Right cardiac atrium (tissue), 5 donors: ENCODE measurements at regions of chr12 and their contacts with region 1.

Region 1: DNA sequence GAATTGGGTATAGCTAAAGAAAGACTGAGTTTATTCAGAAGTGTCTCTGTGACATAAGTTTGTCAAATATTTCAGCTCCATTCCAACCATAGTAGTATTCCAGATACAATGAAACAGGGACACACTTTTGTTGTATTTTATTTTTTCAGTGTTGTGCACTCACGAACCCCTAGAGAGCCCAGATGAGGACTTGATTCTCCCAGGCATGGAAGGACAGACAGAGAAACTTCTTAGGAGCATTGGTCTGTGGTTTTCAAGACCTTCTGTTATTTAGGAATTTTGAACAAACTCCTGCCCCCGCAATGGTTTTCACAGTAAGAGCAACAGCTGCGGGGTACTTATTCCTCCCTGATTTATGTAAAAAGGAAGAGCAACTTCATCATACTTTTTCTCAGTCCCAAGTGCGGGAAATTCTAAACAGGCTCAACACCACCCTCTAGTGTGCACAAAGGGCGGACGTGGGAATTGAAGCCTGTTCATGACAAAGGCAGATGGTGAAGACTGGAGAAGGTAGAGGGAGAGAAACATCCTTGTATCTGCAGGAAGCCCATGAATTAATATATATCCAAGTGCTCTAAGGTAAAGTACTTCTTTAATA is 147.6 kb downstream of the PAH start:
- DNase-seq: peak; percentile 37 to 78 (median 44)
- ATAC-seq: peak; percentile 74 to 81
- H3K4me3 ChIP-seq: no peak overlapping the region
- H3K27ac ChIP-seq: no peak overlapping the region
- H3K4me1 ChIP-seq: no peaks in the 10 kb centered on the region
- H3K27me3 ChIP-seq: no peaks in the 10 kb centered on the region

Region 2: DNA sequence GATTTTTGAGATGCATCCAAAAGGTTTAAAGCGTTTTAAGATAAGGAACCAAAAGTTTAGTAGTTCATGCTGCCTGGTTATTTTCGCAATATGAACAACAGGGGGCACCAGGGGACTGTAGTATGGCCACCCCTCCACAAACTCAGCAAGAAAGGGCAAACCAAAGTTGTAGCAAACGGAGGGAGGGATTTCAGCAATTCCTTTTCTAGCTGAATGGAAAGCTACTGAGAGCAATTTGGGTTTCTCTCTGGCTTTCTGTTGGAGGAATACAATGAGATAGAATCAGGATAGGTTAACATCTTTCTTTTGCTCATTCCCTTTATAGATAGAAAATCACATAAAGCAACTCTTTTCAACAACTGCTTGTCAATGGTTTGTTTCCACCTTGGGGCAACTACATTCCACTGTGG is 829.6 kb before region 1 on chr12:
- intact Hi-C with region 1: loop called in 1 of 4 experiments (anchors 10 kb)
- DNase-seq: peak in 2 of 3 donors; percentile 31 to 69
- ATAC-seq: peak; percentile 49 to 66
- H3K4me3 ChIP-seq: no peak overlapping the region
- H3K27ac ChIP-seq: no peak overlapping the region
- H3K4me1 ChIP-seq: no peaks in the 10 kb centered on the region
- H3K27me3 ChIP-seq: no peaks in the 10 kb centered on the region

Region 3: GRCh38 chr12:102702447-102703114 is 66.8 kb before region 1 on chr12:
- intact Hi-C with region 1: no loop called
- DNase-seq: peak; percentile 44 to 64 (median 47)
- ATAC-seq: peak; percentile 65 to 68
- H3K4me3 ChIP-seq: no peak overlapping the region
- H3K27ac ChIP-seq: no peak overlapping the region
- H3K4me1 ChIP-seq: no peaks in the 10 kb centered on the region
- H3K27me3 ChIP-seq: no peaks in the 10 kb centered on the region